WTC11 (cell line): ENCODE measurements at regions of chr3 and their contacts with region 1.

Region 1: DNA sequence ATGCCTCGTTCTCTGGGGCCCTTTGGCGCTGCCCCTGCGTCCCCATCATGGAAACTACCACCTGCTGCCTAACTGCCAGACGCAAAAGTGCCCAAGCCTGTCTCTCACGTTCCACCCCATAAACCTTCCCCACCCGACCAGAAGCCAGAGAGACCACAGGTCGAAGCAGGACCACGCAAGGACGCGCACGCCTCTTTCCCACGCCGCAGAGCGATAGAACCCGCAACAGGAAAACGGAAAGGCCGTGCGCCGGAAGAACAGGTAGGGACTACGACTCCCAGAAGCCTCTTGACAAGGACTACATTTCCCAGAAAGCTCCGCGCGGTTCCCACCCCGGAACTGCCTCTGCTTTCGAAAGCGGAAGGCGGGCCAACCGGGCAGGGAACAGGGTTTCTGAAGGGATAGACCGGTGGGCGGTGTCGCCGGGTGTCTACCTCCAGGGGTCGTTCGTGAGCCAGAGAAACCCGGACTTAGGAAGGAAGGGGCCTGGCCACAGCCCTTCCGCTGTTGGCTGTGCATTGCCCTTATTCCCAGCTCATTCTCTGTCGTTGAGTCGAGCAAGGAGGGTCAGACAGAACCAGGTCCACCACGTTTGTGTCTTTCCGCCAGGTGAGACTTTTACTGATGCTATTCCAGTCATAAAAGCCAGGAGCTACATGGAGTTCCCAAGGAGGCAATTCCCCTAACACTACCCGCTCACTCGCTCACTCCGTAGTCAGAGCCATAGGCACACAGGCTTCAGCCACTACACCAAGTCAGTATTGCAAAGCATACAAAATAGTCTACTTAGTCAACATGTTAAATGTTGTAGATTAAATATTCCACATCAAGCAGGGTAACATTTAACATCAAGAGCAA is 56.6 kb upstream of the ZBTB38 start:
- DNase-seq: peak; percentile 100
- ATAC-seq: peak; percentile 94
- H3K4me3 Mint-ChIP-seq: peak overlapping the region; percentile 94
- H3K27ac Mint-ChIP-seq: peak overlapping the region; percentile 87
- H3K4me1 Mint-ChIP-seq: peaks cover 22% of the 10 kb centered on the region
- H3K27me3 Mint-ChIP-seq: peaks cover 21% of the 10 kb centered on the region
- CTCF ChIP-seq: peak; percentile 43

Region 2: DNA sequence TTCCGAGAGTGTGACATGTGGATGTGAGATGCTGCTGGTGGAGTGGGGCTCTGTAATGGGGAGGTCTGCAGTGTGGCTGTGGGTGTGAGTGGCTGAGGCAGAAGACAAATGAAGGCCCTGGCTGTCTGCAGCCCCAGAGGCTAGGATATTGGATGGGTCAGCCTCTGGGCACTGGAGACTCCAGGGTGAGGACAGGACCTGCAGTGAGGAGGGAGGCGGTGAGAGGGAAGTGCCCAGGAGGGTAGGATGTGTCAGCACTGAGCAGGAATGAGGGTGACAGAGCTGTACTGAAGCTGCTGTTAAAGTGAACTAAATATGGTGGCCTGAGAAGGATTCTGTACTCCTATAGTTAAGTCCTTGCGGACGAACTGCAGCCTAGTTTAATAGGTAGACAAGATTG is 107.4 kb before region 1 on chr3:
- CTCF ChIA-PET with region 1: no interaction called
- POLR2A ChIA-PET with region 1: no interaction called
- DNase-seq: no peak
- ATAC-seq: no peak
- H3K4me3 Mint-ChIP-seq: no peak overlapping the region
- H3K27ac Mint-ChIP-seq: no peak overlapping the region
- H3K4me1 Mint-ChIP-seq: peaks cover 14% of the 10 kb centered on the region
- H3K27me3 Mint-ChIP-seq: no peaks in the 10 kb centered on the region; the same call in 1 of the 2 replicates
- CTCF ChIP-seq: no peak

Region 3: GRCh38 chr3:141218162-141218835 is 93.4 kb before region 1 on chr3:
- CTCF ChIA-PET with region 1: no interaction called
- POLR2A ChIA-PET with region 1: no interaction called
- DNase-seq: no peak
- ATAC-seq: no peak
- H3K4me3 Mint-ChIP-seq: no peak overlapping the region
- H3K27ac Mint-ChIP-seq: no peak overlapping the region
- H3K4me1 Mint-ChIP-seq: peaks cover 3% of the 10 kb centered on the region; the same call in 1 of the 2 replicates
- H3K27me3 Mint-ChIP-seq: peaks cover 5% of the 10 kb centered on the region
- CTCF ChIP-seq: no peak

Region 4: DNA sequence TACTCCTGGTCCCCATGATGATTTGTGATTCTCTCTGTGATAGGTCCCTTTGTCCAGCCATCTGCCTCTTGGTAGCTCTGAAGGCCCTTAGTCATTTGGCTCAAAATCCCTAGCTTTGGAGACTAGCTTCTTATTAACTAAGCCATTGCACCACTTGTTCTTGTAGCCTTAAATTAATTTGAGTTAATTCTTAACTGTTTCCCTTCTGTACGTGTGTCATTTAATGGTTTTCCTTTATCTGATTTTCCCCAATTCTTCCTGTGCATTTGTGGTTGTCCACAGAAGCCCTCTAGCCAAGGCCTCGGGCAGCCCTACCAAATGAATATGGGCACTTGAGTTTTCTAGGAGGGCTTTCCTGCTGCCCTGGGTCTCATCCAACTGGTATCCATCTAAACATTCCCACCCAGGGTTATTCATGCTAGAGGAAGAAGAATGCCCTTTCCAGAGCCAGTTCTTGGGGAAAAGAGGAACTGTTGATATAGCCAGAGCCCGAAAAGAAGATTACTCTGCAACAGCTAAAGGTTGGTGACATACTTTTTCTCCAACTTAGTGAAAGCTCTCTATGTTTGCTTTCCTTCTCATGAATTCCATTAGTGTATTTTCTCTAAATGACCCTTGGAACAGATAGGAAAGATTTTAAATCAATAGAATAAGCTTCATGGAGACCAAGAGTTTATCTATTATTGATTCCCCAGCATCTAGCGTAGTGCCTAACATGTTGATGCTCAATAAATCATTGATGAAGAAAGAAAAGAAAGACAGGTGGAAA is 12.4 kb after region 1 on chr3:
- CTCF ChIA-PET with region 1: interaction called, 16 read pairs
- POLR2A ChIA-PET with region 1: no interaction called
- DNase-seq: no peak
- ATAC-seq: no peak
- H3K4me3 Mint-ChIP-seq: no peak overlapping the region
- H3K27ac Mint-ChIP-seq: no peak overlapping the region
- H3K4me1 Mint-ChIP-seq: peaks cover 29% of the 10 kb centered on the region
- H3K27me3 Mint-ChIP-seq: no peaks in the 10 kb centered on the region; the same call in 1 of the 2 replicates
- CTCF ChIP-seq: no peak

Region 5: DNA sequence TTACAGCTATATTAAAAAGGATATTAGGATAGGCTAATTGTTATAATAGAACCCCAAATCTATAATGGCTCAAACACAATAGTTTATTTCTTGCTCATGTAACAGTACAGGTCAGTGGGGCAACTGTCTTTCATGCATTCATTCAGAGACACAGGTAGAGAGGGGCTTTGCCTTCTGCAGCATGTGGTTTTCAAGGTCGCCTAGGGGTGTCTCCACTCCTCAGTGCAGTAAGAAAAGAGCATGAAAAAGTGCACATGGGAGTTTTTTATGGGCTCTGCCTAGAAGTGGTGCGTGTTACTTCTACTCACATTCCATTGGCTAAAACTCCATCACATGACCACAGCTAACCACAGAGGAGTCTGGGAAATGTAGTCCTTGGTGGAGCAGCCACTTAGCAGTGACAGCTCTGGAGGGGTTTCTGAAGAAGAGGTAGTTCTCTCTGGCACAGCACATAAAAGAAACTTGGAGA is 58.4 kb after region 1 on chr3:
- CTCF ChIA-PET with region 1: interaction called, 10 read pairs
- POLR2A ChIA-PET with region 1: interaction called, 3 read pairs
- DNase-seq: peak; percentile 23
- ATAC-seq: peak; percentile 85
- H3K4me3 Mint-ChIP-seq: no peak overlapping the region
- H3K27ac Mint-ChIP-seq: 0 out of 2 replicates have a peak overlapping the region, but pooled peaks have one; percentile 20
- H3K4me1 Mint-ChIP-seq: peaks cover 68% of the 10 kb centered on the region
- H3K27me3 Mint-ChIP-seq: no peaks in the 10 kb centered on the region; the same call in none of the 2 replicates
- CTCF ChIP-seq: no peak

Region 6: DNA sequence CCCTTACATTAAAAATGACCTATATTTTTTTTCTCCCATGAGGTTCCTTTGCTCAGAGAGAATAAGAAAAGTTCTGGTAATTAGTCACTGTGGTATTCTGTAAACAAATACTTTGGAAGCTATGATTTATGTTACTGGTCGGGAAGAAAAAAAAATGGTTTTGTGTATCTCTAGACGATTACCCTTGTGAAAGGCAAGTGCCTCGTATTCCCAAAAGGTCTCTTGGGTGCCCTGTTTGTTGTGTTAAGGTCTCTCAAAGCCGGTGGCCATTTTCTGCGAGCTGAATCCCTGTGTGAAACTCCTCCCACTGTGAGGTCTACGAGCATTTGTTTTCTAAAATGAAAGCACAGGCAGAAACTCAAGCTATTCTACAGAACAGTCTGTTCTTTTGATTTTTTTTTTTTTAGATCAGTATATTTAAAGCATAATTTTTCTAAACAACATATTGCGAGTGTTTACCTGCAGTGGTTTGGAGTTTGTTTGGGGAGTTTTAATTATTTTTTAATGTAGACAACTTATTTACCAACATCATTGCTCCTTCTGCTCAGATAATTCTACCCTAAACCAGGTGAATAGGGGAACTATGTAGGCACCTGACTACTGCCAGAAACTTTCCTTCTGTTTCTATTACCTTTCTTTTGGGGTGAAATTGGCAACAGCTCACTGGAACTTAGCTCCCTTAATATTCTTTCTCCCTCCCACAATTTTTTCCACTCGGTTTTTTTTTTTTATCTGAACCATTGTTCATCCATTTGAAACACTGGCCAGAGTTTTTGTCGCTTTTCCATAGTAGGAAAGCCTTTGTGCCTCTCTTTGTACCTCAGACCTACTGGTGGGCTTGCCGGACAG is 100.6 kb after region 1 on chr3:
- CTCF ChIA-PET with region 1: interaction called, 14 read pairs
- POLR2A ChIA-PET with region 1: no interaction called
- DNase-seq: no peak
- ATAC-seq: peak; percentile 62; the same call in 1 of the 2 replicates
- H3K4me3 Mint-ChIP-seq: no peak overlapping the region
- H3K27ac Mint-ChIP-seq: peak overlapping the region; percentile 34
- H3K4me1 Mint-ChIP-seq: peaks cover 29% of the 10 kb centered on the region
- H3K27me3 Mint-ChIP-seq: peaks cover 31% of the 10 kb centered on the region
- CTCF ChIP-seq: no peak

Region 7: GRCh38 chr3:141431411-141432378 is 120.0 kb after region 1 on chr3:
- CTCF ChIA-PET with region 1: interaction called, 16 read pairs
- POLR2A ChIA-PET with region 1: no interaction called
- DNase-seq: no peak
- ATAC-seq: no peak
- H3K4me3 Mint-ChIP-seq: no peak overlapping the region
- H3K27ac Mint-ChIP-seq: no peak overlapping the region
- H3K4me1 Mint-ChIP-seq: peaks cover 12% of the 10 kb centered on the region
- H3K27me3 Mint-ChIP-seq: no peaks in the 10 kb centered on the region
- CTCF ChIP-seq: no peak

Region 8: DNA sequence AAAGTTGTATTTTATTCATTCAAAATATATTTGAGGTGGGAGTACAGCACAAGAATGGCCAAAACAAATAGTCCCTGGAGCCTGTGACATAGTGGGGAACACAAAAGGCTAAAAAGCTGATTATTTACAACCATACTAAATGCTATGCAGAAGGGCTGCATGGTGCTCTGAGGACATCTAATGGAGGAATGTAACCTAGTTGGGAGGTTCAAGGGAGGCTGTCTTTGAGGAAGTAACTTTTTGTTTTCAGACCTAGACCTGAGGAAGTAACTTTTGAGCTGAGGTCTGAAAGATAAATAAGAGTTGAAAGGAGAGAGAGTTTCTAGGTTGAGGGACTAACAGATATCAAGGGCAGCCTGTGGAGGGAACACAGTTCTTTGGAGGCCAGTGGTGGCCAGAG is 140.3 kb after region 1 on chr3:
- CTCF ChIA-PET with region 1: interaction called, 119 read pairs
- POLR2A ChIA-PET with region 1: no interaction called
- DNase-seq: no peak
- ATAC-seq: peak; percentile 68
- H3K4me3 Mint-ChIP-seq: no peak overlapping the region
- H3K27ac Mint-ChIP-seq: no peak overlapping the region
- H3K4me1 Mint-ChIP-seq: peaks cover 14% of the 10 kb centered on the region
- H3K27me3 Mint-ChIP-seq: peaks cover 4% of the 10 kb centered on the region; the same call in 1 of the 2 replicates
- CTCF ChIP-seq: no peak

Region 9: DNA sequence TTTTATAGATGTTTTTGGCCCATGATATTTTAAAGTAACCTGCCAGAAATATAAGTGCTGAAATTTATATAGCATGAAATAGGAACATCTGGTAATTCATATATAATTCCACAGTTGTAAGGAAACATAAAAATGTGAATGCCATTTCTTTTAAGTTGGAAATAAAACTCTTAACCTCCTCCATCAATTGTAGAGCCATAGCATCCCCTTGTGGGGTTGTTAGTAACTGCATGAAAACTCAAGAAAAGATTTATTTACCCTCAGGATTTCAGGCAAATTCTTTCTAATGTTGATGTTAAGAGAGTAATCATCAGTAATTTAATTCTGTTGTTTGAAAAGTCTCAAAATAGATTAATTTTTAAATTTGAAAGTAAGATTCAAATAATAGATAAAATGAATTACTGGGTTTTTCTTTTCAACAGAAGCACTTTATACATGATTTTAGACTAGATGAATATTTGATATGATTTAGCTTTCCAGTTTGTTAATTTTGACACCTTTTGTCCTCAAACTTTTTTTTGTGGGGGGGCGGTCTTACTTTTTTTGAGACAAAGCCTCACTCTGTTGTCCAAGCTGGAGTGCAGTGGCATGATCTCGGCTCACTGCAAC is 249.8 kb after region 1 on chr3:
- CTCF ChIA-PET with region 1: interaction called, 12 read pairs
- POLR2A ChIA-PET with region 1: interaction called, 5 read pairs
- DNase-seq: no peak
- ATAC-seq: no peak; the same call in 1 of the 2 replicates
- H3K4me3 Mint-ChIP-seq: no peak overlapping the region
- H3K27ac Mint-ChIP-seq: no peak overlapping the region
- H3K4me1 Mint-ChIP-seq: no peaks in the 10 kb centered on the region
- H3K27me3 Mint-ChIP-seq: no peaks in the 10 kb centered on the region
- CTCF ChIP-seq: peak; percentile 90